Activated CD8-positive, alpha-beta T cell treated with anti-CD3 and anti-CD28 coated beads, Interleukin-2, amount 10 ng/mL, durations not matched to agents 7 days and 5 days (primary cell): ENCODE measurements at regions of chr14 and their contacts with region 1.

Region 1: DNA sequence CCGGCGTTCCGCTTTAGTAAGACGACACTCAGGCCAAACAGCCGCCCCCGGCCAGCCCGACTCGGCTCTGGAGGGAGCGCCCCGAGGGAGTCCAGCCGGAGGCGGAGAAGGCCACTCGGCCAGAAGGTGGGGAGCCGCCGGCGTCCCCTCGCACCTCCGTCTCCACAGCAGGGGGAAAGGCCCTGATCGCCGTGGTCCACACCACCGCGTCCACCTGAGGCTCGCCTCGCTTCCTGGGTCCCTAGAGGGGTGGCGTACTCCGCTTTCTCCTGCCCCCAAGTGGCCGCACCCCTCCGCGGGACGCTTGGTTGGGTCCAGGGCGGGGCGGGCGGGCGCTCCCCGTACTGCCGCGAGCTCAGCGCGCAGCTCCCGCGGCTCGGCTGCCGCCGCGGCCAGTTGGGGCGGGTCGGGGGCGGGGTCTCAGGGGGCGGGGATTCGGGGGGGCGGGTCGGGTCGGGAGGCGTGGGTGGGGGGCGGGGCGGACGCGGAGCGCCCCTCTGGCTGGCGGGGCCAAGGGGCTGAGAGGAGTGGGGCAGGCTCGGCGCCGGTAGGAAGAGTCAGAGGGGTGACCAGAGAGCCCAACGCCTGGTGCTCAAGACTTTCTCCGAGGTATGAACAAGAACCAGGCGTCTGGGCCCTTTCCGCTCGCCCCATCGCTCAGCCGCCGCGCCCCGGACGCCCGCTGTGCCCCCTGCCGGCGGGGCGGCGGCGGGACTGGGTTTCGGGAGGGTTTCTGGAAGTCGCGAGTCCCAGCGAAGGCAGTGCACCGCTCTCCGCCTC is at the start of gene FRMD6:
- DNase-seq: peak; percentile 87
- ATAC-seq: peak; percentile 85
- H3K4me3 Mint-ChIP-seq: peak within 1 kb of the TSS; percentile 81
- H3K27ac Mint-ChIP-seq: peak within 1 kb of the TSS; percentile 83
- H3K4me1 Mint-ChIP-seq: peaks cover 25% of the 10 kb centered on the region
- H3K27me3 Mint-ChIP-seq: peaks cover 18% of the 10 kb centered on the region
- total RNA-seq, gene FRMD6: 3.2 to 3.5 TPM

Region 2: DNA sequence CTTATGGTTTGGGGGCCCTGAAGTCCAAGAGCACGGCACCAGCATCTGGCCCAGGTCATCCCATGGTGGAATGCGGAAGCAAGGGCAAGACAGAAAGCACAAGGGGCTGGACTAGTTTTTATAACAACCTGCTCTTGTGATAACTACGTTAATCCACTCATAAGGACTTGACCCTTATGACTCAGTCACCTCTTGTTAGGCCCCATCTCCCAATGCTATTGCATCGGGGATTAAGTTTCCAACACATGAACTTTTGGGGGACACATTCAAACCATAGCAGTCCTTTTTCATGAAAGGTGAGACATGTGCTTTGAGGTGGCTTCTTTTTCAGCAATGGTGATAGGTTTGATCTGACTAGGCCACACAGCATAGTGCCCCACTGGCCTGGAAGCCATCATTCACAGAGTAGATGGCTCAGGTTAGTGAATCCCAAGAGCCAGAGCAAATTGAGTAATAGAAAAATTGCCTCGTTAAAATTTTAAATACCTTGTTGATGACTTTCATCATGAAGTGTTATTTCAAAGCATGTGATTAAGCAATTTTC is 12.3 kb after region 1 on chr14:
- CTCF ChIA-PET with region 1: interaction called, 12 read pairs
- POLR2A ChIA-PET with region 1: no interaction called
- DNase-seq: no peak
- ATAC-seq: no peak
- H3K4me3 Mint-ChIP-seq: no peak overlapping the region
- H3K27ac Mint-ChIP-seq: no peak overlapping the region
- H3K4me1 Mint-ChIP-seq: no peaks in the 10 kb centered on the region
- H3K27me3 Mint-ChIP-seq: peaks cover 9% of the 10 kb centered on the region

Region 3: GRCh38 chr14:51780006-51780692 is 128.6 kb after region 1 on chr14:
- CTCF ChIA-PET with region 1: interaction called, 10 read pairs
- POLR2A ChIA-PET with region 1: no interaction called
- DNase-seq: peak; percentile 81
- ATAC-seq: peak; percentile 73
- H3K4me3 Mint-ChIP-seq: no peak overlapping the region
- H3K27ac Mint-ChIP-seq: no peak overlapping the region
- H3K4me1 Mint-ChIP-seq: peaks cover 12% of the 10 kb centered on the region
- H3K27me3 Mint-ChIP-seq: peaks cover 20% of the 10 kb centered on the region